Activated CD4-positive, alpha-beta memory T cell treated with anti-CD3 and anti-CD28 coated beads for 36 hours (primary cell): ENCODE measurements at regions of chr13 and their contacts with region 1.

Region 1: GRCh38 chr13:25281193-25281934 is 5.9 kb downstream of the MTMR6 start:
- DNase-seq: peak; percentile 58
- H3K4me3 Mint-ChIP-seq: peak overlapping the region; percentile 11
- H3K27ac Mint-ChIP-seq: peak overlapping the region; percentile 83
- H3K4me1 Mint-ChIP-seq: peaks cover 86% of the 10 kb centered on the region
- H3K27me3 Mint-ChIP-seq: no peaks in the 10 kb centered on the region

Region 2: DNA sequence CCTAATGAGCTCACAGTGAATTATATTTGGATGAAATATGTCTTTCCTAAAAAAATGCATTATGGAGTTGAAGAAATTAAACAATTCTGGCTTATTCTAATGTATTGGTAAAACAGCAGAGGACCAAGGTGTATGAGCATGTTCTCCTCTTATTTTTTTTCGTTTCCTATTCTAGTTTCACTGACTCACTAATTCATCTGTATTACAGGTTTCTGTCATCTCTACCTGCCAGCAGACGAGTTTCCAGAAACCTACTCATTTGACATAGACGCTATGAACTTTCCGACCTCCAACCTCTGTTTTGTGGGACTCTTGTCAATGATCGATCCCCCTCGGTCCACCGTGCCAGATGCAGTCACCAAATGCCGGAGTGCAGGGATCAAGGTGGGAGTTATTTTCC is 580.8 kb before region 1 on chr13:
- CTCF ChIA-PET with region 1: no interaction called
- POLR2A ChIA-PET with region 1: no interaction called
- intact Hi-C with region 1: loop called (anchors 5 kb)
- DNase-seq: peak; percentile 40
- H3K4me3 Mint-ChIP-seq: no peak overlapping the region
- H3K27ac Mint-ChIP-seq: no peak overlapping the region
- H3K4me1 Mint-ChIP-seq: peaks cover 12% of the 10 kb centered on the region
- H3K27me3 Mint-ChIP-seq: peaks cover 28% of the 10 kb centered on the region

Region 3: DNA sequence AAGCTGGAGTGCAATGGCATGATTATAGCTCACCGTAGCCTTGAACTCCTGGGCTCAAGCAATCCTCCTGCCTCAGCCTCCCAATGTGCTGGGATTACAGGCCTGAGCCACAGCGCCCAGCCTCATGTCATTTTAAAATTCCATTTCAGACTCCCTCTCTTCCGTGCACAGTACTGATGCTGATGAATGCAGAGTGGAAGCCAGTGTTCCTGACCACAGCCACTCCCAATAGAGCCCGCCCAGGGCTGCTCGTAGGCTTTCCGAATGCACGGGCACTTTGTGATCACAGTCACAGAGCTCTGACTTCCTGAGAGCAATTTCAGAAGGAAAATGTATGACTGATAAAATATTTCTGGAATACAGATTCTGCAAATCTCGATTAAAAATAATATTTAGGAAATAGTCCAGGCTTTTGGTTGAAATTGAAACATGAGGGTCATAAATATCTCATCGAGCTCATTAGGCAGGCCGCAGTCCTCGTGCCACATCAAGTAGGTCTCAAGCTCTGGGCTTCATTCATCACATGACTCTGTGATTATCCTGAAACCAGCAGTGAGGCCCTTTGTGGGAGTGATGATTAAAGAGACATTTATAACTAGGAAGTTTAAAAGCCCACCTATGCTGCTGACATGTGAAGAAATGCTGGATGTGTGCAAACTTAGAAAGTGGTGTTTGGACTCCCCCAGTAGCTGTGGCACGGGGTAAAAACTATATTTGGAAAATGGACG is 70.4 kb before region 1 on chr13:
- CTCF ChIA-PET with region 1: no interaction called
- POLR2A ChIA-PET with region 1: no interaction called
- intact Hi-C with region 1: no loop called
- DNase-seq: no peak
- H3K4me3 Mint-ChIP-seq: no peak overlapping the region
- H3K27ac Mint-ChIP-seq: no peak overlapping the region
- H3K4me1 Mint-ChIP-seq: no peaks in the 10 kb centered on the region
- H3K27me3 Mint-ChIP-seq: peaks cover 11% of the 10 kb centered on the region